ENCODE measurements at regions of chr6 and their contacts with region 1.

Region 1: GRCh38 chr6:166775180-166776081 is 148.4 kb upstream of the RPS6KA2 start:
- DNase-seq: peak; percentile 24 to 82 (median 71)
- ATAC-seq: peak; percentile 91
- H3K4me3 ChIP-seq: no peak overlapping the region
- H3K4me3 Mint-ChIP-seq: no peak overlapping the region
- H3K27ac ChIP-seq: no peak overlapping the region
- H3K27ac Mint-ChIP-seq: peak overlapping the region in 1 of 9 donors; percentile 61
- H3K4me1 ChIP-seq: no peaks in the 10 kb centered on the region
- H3K4me1 Mint-ChIP-seq: peaks cover 0 to 9% (median 5%) of the 10 kb centered on the region in 7 donors
- H3K27me3 ChIP-seq: no peaks in the 10 kb centered on the region
- H3K27me3 Mint-ChIP-seq: peaks cover 0 to 8% (median 0%) of the 10 kb centered on the region in 5 donors

Region 2: GRCh38 chr6:165884813-165885765 is 890.3 kb before region 1 on chr6:
- CTCF ChIA-PET with region 1: no interaction called
- POLR2A ChIA-PET with region 1: no interaction called
- intact Hi-C with region 1: loop called in 1 of 2 experiments (anchors 10 kb)
- DNase-seq: peak; percentile 14 to 61 (median 38)
- ATAC-seq: peak; percentile 70
- H3K4me3 ChIP-seq: no peak overlapping the region
- H3K4me3 Mint-ChIP-seq: peak overlapping the region in 8 of 10 donors; percentile 9 to 64 (median 47)
- H3K27ac ChIP-seq: no peak overlapping the region
- H3K27ac Mint-ChIP-seq: peak overlapping the region in 3 of 9 donors; percentile 9 to 61 (median 31)
- H3K4me1 ChIP-seq: no peaks in the 10 kb centered on the region
- H3K4me1 Mint-ChIP-seq: peaks cover 0 to 12% (median 8%) of the 10 kb centered on the region in 7 donors
- H3K27me3 ChIP-seq: no peaks in the 10 kb centered on the region
- H3K27me3 Mint-ChIP-seq: peaks cover 4 to 29% (median 16%) of the 10 kb centered on the region in 5 donors

Region 3: GRCh38 chr6:166435574-166435973 is 339.9 kb before region 1 on chr6:
- CTCF ChIA-PET with region 1: no interaction called
- POLR2A ChIA-PET with region 1: no interaction called
- intact Hi-C with region 1: loop called in 1 of 2 experiments (anchors 10 kb)
- DNase-seq: peak in 5 of 9 donors; percentile 26 to 50 (median 27)
- ATAC-seq: peak; percentile 84
- H3K4me3 ChIP-seq: no peak overlapping the region
- H3K4me3 Mint-ChIP-seq: peak overlapping the region in 5 of 10 donors; percentile 17 to 60 (median 48)
- H3K27ac ChIP-seq: no peak overlapping the region
- H3K27ac Mint-ChIP-seq: peak overlapping the region in 7 of 9 donors; percentile 62 to 96 (median 83)
- H3K4me1 ChIP-seq: peaks cover 15 to 19% of the 10 kb centered on the region in 2 donors
- H3K4me1 Mint-ChIP-seq: peaks cover 14 to 43% (median 23%) of the 10 kb centered on the region in 7 donors
- H3K27me3 ChIP-seq: no peaks in the 10 kb centered on the region
- H3K27me3 Mint-ChIP-seq: peaks cover 0 to 8% (median 0%) of the 10 kb centered on the region in 5 donors

Region 4: DNA sequence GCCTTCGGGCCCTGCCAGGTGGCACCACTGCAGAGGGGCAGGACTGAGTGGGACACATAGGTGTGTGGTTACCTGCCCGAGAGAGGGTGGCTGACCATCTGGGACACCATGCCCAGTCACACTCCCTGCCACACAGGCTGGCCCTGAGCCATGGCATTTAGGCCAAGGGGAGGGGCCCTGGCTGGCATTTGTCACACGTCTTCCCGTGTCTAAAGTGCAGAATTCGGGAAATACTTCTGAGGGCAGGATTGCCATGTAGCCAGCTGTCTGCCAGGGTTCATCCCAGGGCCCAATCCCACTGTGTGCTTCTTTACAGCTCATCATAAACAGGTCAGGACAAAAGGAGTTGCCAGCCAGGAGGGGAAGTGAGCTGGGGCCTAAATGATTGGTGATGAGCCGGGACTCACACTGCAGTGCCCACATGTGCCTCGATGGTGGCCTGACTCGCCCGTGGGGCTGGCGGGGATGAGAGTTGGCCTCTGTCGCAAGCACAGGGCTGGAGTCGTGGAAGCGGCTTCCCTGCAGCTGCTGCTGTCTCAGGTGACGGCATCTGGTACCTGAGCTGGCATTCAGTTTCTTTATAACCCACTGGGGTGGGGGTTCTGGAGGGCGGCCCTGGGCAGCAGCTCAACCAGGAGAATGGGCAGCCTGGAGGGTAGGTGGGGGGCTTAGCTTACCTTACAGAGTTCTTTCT is 509.8 kb after region 1 on chr6:
- CTCF ChIA-PET with region 1: interaction called, 12 read pairs
- POLR2A ChIA-PET with region 1: no interaction called
- intact Hi-C with region 1: loop called (anchors 1 to 2 kb)
- DNase-seq: no peak
- ATAC-seq: no peak
- H3K4me3 ChIP-seq: no peak overlapping the region
- H3K4me3 Mint-ChIP-seq: no peak overlapping the region
- H3K27ac ChIP-seq: no peak overlapping the region
- H3K27ac Mint-ChIP-seq: no peak overlapping the region
- H3K4me1 ChIP-seq: no peaks in the 10 kb centered on the region
- H3K4me1 Mint-ChIP-seq: no peaks in the 10 kb centered on the region
- H3K27me3 ChIP-seq: no peaks in the 10 kb centered on the region
- H3K27me3 Mint-ChIP-seq: peaks cover 0 to 12% (median 0%) of the 10 kb centered on the region in 5 donors

Region 5: DNA sequence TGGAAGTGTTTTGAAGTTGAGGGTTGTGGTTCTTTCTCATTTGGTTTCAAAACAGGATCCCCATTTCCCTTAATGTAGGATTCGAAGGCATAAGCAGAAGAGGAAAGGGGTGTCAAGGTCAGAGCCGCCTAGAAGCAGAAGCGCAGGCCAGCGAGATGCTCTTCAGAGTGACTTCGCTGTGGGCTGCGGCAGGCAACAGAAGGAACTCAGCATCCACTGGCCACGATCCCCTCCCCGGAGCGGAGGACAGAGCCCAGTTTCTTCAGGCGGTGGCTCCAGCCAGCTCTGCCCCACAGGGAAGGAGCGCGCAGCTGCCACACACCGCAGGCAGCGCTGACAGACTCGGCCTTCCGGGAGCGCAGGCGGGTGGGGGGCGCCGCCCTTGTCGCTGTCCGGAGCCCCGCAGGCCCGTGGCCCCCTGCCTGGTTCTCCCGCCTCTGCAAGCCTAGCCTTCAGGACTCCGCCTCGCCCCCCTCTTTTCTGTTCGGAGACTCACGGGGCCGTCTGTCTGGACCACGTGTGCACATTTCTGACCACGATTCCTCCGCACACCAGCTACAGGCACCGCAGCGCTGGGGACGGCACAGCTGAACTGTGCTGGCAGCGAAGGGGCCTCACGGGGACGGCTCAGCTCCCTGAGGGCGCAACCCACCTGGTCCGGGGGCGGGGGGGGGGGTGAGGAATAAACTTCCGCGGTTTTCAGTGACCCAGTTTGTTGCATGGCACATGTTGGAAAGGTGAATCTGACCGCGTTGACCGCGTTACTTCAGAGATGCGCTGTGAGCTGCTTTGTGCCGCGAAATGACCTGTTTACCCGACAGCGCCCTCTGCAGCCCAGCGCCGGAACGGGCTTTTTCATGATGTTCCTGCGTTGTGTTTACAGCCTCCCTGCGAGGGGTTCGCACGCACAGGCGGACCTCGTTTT is 575.6 kb after region 1 on chr6:
- CTCF ChIA-PET with region 1: no interaction called
- POLR2A ChIA-PET with region 1: no interaction called
- intact Hi-C with region 1: loop called in 1 of 2 experiments (anchors 5 kb)
- DNase-seq: peak; percentile 24 to 85 (median 66)
- ATAC-seq: peak; percentile 89
- H3K4me3 ChIP-seq: peak overlapping the region; percentile 65
- H3K4me3 Mint-ChIP-seq: peak overlapping the region; percentile 83 to 94 (median 91)
- H3K27ac ChIP-seq: no peak overlapping the region
- H3K27ac Mint-ChIP-seq: peak overlapping the region in 6 of 9 donors; percentile 11 to 70 (median 34)
- H3K4me1 ChIP-seq: peaks cover 0 to 4% of the 10 kb centered on the region in 2 donors
- H3K4me1 Mint-ChIP-seq: peaks cover 8 to 24% (median 16%) of the 10 kb centered on the region in 7 donors
- H3K27me3 ChIP-seq: no peaks in the 10 kb centered on the region
- H3K27me3 Mint-ChIP-seq: peaks cover 6 to 44% (median 20%) of the 10 kb centered on the region in 5 donors